Ascending aorta (tissue), 2 donors: ENCODE measurements at regions of chr1 and their contacts with region 1.

Region 1: DNA sequence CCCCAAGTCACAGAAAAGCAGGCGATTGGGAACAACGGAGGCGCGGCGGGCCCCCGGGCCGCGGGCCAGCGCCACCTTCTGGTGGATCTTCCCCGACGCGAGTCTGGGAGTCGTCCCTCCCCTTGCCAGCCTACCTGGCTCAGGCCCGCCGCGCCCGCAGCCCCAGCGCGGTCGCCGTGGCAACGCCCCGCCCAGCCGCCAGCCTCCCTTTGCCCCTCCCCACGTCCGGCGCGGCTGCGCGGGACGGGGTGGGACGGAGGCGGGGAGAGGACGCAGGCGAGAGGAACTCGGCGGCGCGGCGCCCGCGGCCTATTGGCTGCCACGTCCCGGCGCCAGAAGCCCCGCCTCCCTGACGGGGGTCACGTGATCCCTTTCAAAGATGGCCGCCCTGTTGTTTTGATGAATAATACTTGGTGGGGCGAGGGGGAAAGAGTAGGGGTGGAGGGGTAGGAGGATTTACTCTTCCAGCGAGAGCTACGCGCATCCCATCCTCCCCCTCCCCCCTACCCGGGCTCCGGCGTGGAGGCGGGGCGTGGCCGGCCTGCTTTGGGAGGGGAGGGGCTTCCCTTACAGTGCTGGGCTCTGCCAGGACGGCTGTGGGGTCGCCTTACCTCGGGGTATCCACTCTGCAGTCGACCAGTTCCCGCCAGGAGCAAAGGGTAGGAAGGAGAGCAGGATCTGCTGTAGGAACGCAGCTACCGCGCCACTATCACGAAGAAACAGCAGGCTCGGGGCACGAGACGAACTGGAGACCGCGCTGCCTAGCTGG is at the start of gene UBE4B:
- DNase-seq: peak; percentile 95 to 99
- H3K4me3 ChIP-seq: peak within 1 kb of the TSS; percentile 77 to 82
- H3K27ac ChIP-seq: peak within 1 kb of the TSS; percentile 86 to 92
- H3K4me1 ChIP-seq: peaks cover 3 to 13% of the 10 kb centered on the region in 2 donors
- H3K27me3 ChIP-seq: no peaks in the 10 kb centered on the region
- CTCF ChIP-seq: peak; percentile 69 to 90 (median 75)
- total RNA-seq, gene UBE4B: 35.2 TPM

Region 2: GRCh38 chr1:9910425-9911178 is 122.2 kb before region 1 on chr1:
- intact Hi-C with region 1: loop called (anchors 1 kb)
- DNase-seq: peak; percentile 99 to 100
- H3K4me3 ChIP-seq: peak overlapping the region; percentile 64 to 65
- H3K27ac ChIP-seq: peak overlapping the region; percentile 80 to 92
- H3K4me1 ChIP-seq: peaks cover 5 to 16% of the 10 kb centered on the region in 2 donors
- H3K27me3 ChIP-seq: no peaks in the 10 kb centered on the region
- CTCF ChIP-seq: no peak

Region 3: DNA sequence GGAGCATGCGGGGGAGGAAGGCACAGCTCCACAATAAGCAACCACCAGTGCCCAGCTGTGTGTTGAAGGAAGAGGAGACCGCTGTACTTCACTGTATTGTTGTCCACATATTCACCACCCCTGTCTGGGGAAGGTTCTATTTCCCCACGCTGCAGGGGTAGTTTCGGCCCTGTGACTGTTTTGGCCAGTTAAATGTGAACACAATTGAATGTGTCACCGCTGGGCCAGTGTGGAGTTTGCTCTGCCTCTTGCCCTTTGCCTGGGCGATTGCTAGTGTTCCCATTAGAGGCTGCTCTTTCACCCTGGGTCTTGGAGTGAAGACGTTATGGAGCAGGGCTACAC is 32.5 kb after region 1 on chr1:
- intact Hi-C with region 1: loop called (anchors 2 kb)
- DNase-seq: no peak
- H3K4me3 ChIP-seq: no peak overlapping the region
- H3K27ac ChIP-seq: peak overlapping the region; percentile 88 to 91
- H3K4me1 ChIP-seq: peaks cover 3 to 39% of the 10 kb centered on the region in 2 donors
- H3K27me3 ChIP-seq: no peaks in the 10 kb centered on the region
- CTCF ChIP-seq: no peak

Region 4: DNA sequence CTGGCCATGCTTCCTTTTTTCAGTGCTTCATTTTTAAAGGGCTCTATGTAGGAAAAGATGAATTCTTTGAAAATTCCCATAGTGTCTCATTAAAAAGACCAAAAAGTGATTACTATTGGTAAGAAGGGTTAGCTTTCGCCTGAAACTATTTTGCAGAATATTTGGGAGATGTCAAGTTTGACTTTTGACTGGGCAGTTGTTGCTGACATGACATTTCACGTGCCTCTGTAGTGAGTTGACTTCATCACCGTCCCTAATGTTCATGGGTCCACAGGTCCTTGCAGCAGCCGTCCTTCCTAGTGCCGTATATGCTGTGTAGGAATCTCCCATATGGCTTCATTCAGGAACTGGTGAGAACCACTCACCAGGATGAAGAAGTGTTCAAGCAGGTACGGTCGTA is 88.9 kb after region 1 on chr1:
- intact Hi-C with region 1: loop called (anchors 2 kb)
- DNase-seq: no peak
- H3K4me3 ChIP-seq: no peak overlapping the region
- H3K27ac ChIP-seq: peak overlapping the region; percentile 52 to 74
- H3K4me1 ChIP-seq: peaks cover 7 to 27% of the 10 kb centered on the region in 2 donors
- H3K27me3 ChIP-seq: no peaks in the 10 kb centered on the region
- CTCF ChIP-seq: no peak